ENCODE measurements at regions of chr11 and their contacts with region 1.

Region 1: GRCh38 chr11:5380740-5381342 is 2.8 kb upstream of the OR51M1 start:
- DNase-seq: no peak
- H3K4me3 ChIP-seq: no peak overlapping the region
- H3K27ac ChIP-seq: no peak overlapping the region
- H3K4me1 ChIP-seq: no peaks in the 10 kb centered on the region
- H3K27me3 ChIP-seq: no peaks in the 10 kb centered on the region
- CTCF ChIP-seq: peak in 3 of 4 experiments; percentile 20 to 51 (median 27)
- EP300 ChIP-seq: no peak
- POLR2A ChIP-seq: no peak

Region 2: GRCh38 chr11:4626207-4627099 is 754.4 kb before region 1 on chr11:
- intact Hi-C with region 1: loop called (anchors 5 kb)
- DNase-seq: peak; percentile 74
- H3K4me3 ChIP-seq: no peak overlapping the region
- H3K27ac ChIP-seq: no peak overlapping the region
- H3K4me1 ChIP-seq: no peaks in the 10 kb centered on the region
- H3K27me3 ChIP-seq: no peaks in the 10 kb centered on the region
- CTCF ChIP-seq: peak; percentile 15 to 75 (median 60)
- EP300 ChIP-seq: no peak
- POLR2A ChIP-seq: no peak